Esophagus muscularis mucosa (tissue), 4 donors: ENCODE measurements at regions of chr2 and their contacts with region 1.

Region 1: GRCh38 chr2:219177552-219178376 is at the start of gene RETREG2:
- DNase-seq: peak; percentile 99
- H3K4me3 ChIP-seq: peak within 1 kb of the TSS; percentile 95 to 100 (median 96)
- H3K27ac ChIP-seq: peak within 1 kb of the TSS; percentile 95 to 100 (median 96)
- H3K4me1 ChIP-seq: peaks cover 25 to 59% (median 41%) of the 10 kb centered on the region in 4 donors
- H3K27me3 ChIP-seq: no peaks in the 10 kb centered on the region
- CTCF ChIP-seq: peak; percentile 49 to 64 (median 58)
- EP300 ChIP-seq: no peak
- POLR2A ChIP-seq: peak; percentile 98
- total RNA-seq, gene RETREG2: 44.0 to 69.3 (median 56.3) TPM

Region 2: GRCh38 chr2:219029829-219030165 is 148.0 kb before region 1 on chr2:
- intact Hi-C with region 1: no loop called
- DNase-seq: peak; percentile 95
- H3K4me3 ChIP-seq: no peak overlapping the region
- H3K27ac ChIP-seq: no peak overlapping the region
- H3K4me1 ChIP-seq: no peaks in the 10 kb centered on the region
- H3K27me3 ChIP-seq: peaks cover 0 to 63% (median 9%) of the 10 kb centered on the region in 4 donors
- CTCF ChIP-seq: peak; percentile 85 to 100 (median 90)
- EP300 ChIP-seq: no peak
- POLR2A ChIP-seq: no peak

Region 3: GRCh38 chr2:219206442-219207253 is 28.9 kb after region 1 on chr2 and contains the start of gene ZFAND2B:
- intact Hi-C with region 1: loop called (anchors 2 kb)
- DNase-seq: peak; percentile 97
- H3K4me3 ChIP-seq: peak within 1 kb of the TSS; percentile 71 to 97 (median 78)
- H3K27ac ChIP-seq: peak within 1 kb of the TSS; percentile 90 to 99 (median 96)
- H3K4me1 ChIP-seq: peaks cover 17 to 24% (median 23%) of the 10 kb centered on the region in 4 donors
- H3K27me3 ChIP-seq: peaks cover 0 to 2% (median 0%) of the 10 kb centered on the region in 4 donors
- CTCF ChIP-seq: peak in 2 of 3 experiments; percentile 22 to 31
- EP300 ChIP-seq: no peak
- POLR2A ChIP-seq: peak; percentile 78
- total RNA-seq, gene ZFAND2B: 27.0 to 50.1 (median 36.9) TPM

Region 4: GRCh38 chr2:219388127-219388844 is 210.5 kb after region 1 on chr2:
- intact Hi-C with region 1: loop called (anchors 10 kb)
- DNase-seq: peak; percentile 99
- H3K4me3 ChIP-seq: peak overlapping the region; percentile 67 to 96 (median 82)
- H3K27ac ChIP-seq: peak overlapping the region; percentile 82 to 93 (median 89)
- H3K4me1 ChIP-seq: peaks cover 26 to 38% (median 30%) of the 10 kb centered on the region in 4 donors
- H3K27me3 ChIP-seq: no peaks in the 10 kb centered on the region
- CTCF ChIP-seq: peak; percentile 59 to 92 (median 87)
- EP300 ChIP-seq: no peak
- POLR2A ChIP-seq: no peak

Region 5: GRCh38 chr2:219701847-219702634 is 524.3 kb after region 1 on chr2:
- intact Hi-C with region 1: no loop called
- DNase-seq: no peak
- H3K4me3 ChIP-seq: no peak overlapping the region
- H3K27ac ChIP-seq: no peak overlapping the region
- H3K4me1 ChIP-seq: peaks cover 7 to 19% (median 10%) of the 10 kb centered on the region in 4 donors
- H3K27me3 ChIP-seq: peaks cover 0 to 8% (median 0%) of the 10 kb centered on the region in 4 donors
- CTCF ChIP-seq: no peak
- EP300 ChIP-seq: no peak
- POLR2A ChIP-seq: no peak

Region 6: GRCh38 chr2:220764171-220764570 is 1586.4 kb after region 1 on chr2:
- intact Hi-C with region 1: no loop called
- DNase-seq: no peak
- H3K4me3 ChIP-seq: no peak overlapping the region
- H3K27ac ChIP-seq: no peak overlapping the region
- H3K4me1 ChIP-seq: no peaks in the 10 kb centered on the region
- H3K27me3 ChIP-seq: no peaks in the 10 kb centered on the region
- CTCF ChIP-seq: no peak
- EP300 ChIP-seq: no peak
- POLR2A ChIP-seq: no peak